ENCODE measurements at regions of chr3 and their contacts with region 1.

Region 1: DNA sequence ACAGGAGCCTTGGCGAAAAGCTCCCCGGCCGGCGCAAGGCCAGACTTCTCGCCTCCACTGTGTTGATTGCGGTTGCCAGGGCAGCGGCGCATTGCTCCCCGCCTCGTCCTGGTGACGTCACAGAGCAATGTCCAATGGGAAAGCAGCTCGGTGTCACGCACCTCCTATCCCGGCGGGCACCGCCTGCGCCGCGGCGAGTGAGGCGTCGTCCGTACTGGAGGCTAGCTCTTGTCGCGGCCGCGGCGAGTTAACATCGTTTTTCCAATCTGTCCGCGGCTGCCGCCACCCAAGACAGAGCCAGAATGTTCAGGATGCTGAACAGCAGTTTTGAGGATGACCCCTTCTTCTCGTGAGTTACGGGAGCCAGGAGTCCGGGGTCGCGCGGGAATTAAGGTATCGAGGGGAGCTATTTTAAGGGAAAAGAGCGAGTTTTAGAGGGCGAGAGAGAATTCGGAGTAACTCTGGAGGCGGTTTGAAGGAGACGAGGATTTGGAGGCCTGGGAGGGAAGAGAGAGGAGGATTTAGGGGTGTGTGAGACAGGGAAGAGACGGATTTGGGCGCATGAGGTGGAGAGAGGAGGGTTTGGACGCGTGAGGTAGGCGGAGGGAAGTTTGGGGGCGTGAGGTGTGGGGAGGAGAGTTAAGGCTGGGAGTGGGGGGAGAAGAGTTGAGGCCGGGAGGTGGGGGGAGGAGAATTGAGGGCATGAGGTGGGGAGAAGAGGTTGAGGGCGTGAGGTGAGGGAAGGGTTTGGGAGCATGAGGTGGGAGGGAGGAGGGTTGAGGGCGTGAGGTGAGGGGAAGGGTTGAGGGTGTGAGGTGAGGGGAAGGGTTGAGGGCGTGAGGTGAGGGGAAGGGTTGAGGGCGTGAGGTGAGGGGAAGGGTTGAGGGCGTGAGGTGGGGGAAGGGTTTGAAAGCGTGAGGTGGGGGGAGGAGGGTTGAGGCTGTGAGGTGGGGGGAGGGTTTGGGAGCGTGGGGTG is at the start of gene MLF1:
- DNase-seq: peak; percentile 85 to 98
- H3K4me3 ChIP-seq: peak within 1 kb of the TSS; percentile 65 to 88
- H3K27ac ChIP-seq: peak within 1 kb of the TSS; percentile 55 to 60
- H3K4me1 ChIP-seq: peaks cover 0 to 3% of the 10 kb centered on the region in 2 donors
- H3K27me3 ChIP-seq: no peaks in the 10 kb centered on the region
- CTCF ChIP-seq: no peak
- total RNA-seq, gene MLF1: 3.3 TPM

Region 2: GRCh38 chr3:158295771-158296170 is 275.5 kb before region 1 on chr3:
- intact Hi-C with region 1: no loop called
- DNase-seq: no peak
- H3K4me3 ChIP-seq: no peak overlapping the region
- H3K27ac ChIP-seq: no peak overlapping the region
- H3K4me1 ChIP-seq: no peaks in the 10 kb centered on the region
- H3K27me3 ChIP-seq: no peaks in the 10 kb centered on the region
- CTCF ChIP-seq: no peak

Region 3: DNA sequence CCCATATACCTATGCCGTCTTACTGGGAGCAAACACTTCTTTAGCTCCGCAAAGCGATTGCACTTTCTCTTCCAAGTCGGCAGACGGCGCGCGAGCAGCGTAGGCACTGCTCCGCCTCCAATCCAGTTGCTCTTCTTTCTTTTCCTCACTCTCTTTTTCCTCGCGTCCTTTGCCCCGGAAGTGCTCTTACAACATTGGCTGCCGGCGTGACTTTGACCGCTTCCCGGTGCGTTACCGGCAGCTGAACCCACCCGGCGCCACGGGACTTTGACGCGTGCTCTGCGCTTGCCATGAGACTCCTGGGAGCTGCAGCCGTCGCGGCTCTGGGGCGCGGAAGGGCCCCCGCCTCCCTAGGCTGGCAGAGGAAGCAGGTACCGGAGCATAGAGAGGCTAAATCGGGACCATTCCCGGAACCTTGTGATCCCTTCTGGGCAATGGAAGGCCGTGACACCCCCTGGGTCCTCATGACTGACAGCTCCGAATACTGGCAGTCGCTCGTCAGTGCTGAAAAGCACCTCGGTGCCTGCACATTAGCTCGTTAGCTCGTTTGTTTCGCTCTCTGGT is 73.1 kb after region 1 on chr3 and contains the start of gene GFM1:
- intact Hi-C with region 1: loop called (anchors 1 kb)
- DNase-seq: peak; percentile 64 to 97
- H3K4me3 ChIP-seq: peak within 1 kb of the TSS; percentile 67 to 80
- H3K27ac ChIP-seq: peak within 1 kb of the TSS; percentile 75 to 94
- H3K4me1 ChIP-seq: peaks cover 0 to 11% of the 10 kb centered on the region in 2 donors
- H3K27me3 ChIP-seq: no peaks in the 10 kb centered on the region
- CTCF ChIP-seq: peak; percentile 65 to 95 (median 92)
- total RNA-seq, gene GFM1: 13.9 TPM

Region 4: DNA sequence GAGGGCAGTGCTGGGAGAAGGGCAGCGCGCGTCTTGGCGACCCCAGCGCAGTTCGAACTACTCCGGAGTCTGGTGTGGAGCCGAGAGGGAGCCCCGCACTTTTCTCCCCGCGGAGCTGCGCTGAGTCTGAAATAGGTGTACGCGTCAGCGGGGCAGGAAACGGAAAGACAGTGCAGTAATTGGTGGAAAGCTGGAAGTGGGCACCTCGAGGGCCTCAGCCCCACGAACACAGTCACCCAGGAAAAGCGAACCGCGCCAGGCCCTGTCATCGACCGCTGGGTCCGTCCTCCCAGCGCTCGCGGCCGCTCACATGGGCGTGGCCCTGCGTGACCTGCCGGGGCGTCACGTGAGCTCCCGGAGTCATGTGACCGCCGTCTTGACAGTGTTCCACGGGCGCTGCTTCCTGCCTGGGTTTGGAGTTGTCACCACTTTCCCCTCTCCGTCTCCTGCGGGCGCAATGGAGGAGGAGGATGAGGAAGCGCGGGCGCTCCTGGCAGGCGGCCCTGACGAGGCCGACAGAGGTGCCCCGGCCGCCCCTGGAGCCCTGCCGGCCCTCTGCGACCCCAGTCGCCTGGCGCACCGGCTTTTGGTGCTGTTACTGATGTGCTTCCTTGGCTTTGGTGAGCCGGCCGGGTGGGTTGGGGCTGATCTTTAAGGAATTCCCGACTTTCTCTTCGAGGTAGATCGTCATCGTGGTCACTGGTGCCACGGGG is 230.6 kb after region 1 on chr3 and contains the start of gene MFSD1:
- intact Hi-C with region 1: loop called (anchors 2 kb)
- DNase-seq: peak; percentile 88 to 98
- H3K4me3 ChIP-seq: peak within 1 kb of the TSS; percentile 77 to 95
- H3K27ac ChIP-seq: peak within 1 kb of the TSS; percentile 71 to 89
- H3K4me1 ChIP-seq: peaks cover 3 to 9% of the 10 kb centered on the region in 2 donors
- H3K27me3 ChIP-seq: no peaks in the 10 kb centered on the region
- CTCF ChIP-seq: no peak
- total RNA-seq, gene MFSD1: 35.9 TPM